MCF 10A (cell line): ENCODE measurements at regions of chr1 and their contacts with region 1.

Region 1: DNA sequence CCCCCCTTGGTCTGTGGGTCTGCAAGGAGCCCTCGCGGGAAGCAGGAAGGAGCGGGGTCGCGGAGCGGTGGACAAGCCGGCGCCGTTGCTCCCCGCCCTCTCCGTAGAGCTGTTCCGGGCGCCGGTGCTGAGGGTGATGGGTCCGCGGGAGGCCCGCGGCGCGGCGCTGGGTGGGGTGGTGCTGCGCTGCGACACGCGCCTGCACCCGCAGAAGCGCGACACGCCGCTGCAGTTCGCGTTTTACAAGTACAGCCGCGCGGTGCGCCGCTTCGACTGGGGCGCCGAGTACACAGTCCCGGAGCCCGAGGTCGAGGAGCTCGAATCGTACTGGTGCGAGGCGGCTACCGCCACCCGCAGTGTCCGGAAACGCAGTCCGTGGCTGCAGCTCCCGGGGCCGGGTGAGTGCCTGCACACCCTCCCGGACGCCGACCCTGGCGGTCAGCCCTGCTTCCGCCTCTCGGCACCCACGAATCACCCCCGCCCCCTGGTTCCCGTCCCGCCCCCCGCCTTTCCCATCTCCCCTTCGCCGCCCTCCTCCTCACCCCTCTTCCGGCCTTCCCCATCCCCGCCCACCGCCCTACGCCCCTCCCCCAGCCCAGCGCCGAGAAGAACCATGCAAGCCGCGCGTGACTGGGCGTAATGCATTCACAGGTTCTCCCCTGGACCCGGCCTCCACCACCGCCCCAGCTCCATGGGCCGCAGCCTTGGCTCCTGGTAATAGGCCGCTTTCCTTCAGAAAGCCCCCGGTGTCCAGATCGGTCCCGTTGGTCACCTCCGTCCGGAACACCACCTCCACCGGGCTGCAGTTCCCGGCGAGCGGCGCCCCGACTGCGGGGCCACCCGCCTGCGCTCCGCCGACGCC is 5.5 kb downstream of the FCRLB start:
- DNase-seq: peak; percentile 96
- H3K4me3 Mint-ChIP-seq: peak overlapping the region; percentile 91
- H3K27ac Mint-ChIP-seq: peak overlapping the region; percentile 92
- H3K4me1 Mint-ChIP-seq: peaks cover 37% of the 10 kb centered on the region
- H3K27me3 Mint-ChIP-seq: no peaks in the 10 kb centered on the region
- CTCF ChIP-seq: no peak

Region 2: DNA sequence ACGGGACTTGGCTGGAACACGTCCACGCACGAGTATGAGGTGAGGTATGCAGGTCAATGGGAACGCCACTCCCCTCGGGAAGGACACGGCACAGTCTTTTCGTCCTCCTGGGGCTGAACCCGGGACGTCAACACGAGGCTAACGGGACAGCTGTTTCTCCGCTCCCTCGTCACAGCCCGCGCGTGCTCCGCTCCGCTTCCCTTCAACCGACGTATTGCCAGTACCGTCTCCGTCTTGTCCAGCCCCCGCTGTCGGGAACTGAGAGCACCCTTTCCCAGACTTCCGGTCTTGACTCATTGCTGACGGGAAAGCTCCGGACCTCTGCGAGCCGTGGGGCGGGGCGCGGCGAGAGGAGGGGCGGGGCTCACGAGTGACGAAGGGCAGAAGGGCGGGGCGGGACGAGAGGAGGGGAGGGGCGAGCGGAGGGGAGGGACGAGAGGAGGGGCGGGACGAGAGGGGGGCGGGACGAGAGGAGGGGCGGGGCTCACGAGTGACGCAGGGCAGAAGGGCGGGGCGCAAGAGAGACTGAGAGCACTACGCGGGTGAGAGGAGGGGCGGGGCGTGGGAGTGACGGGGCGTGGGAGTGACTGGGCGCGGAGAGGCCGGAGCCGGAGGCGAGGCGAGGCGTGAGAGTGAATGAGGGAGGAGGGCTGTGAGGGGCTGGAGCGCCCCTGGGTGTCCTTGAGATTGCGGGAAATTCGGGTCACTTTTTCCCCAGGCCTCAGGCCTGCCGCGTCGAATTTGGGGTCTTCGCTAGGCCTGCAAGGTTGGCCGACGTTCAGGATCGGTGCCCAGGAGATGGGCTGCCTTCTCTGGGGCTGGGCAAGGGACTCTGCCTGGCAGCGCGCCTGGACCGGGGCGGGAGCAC is 336.9 kb before region 1 on chr1:
- CTCF ChIA-PET with region 1: no interaction called
- POLR2A ChIA-PET with region 1: interaction called, 14 read pairs
- intact Hi-C with region 1: no loop called
- DNase-seq: peak; percentile 100
- H3K4me3 Mint-ChIP-seq: peak overlapping the region; percentile 88
- H3K27ac Mint-ChIP-seq: peak overlapping the region; percentile 99
- H3K4me1 Mint-ChIP-seq: peaks cover 16% of the 10 kb centered on the region
- H3K27me3 Mint-ChIP-seq: no peaks in the 10 kb centered on the region
- CTCF ChIP-seq: no peak

Region 3: DNA sequence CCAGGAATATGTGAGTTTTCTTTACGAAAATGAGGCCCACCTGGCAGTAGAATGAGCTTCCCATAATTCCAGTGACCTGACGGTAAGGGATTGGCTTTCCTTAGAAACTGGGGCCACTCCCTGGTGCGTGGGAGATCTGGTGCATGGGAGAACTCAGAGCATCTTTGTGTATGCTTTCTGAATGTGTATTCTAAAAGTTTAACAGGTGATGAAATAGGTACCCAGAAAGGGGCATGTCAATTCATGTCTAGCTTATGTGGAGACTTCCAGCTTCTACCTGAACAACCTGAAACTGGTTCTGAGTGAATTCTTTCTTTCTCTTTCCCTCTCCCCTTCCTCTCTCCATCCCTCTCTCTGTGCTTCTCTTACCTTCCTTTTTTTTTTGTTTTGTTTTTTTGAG is 35.0 kb before region 1 on chr1:
- CTCF ChIA-PET with region 1: no interaction called
- POLR2A ChIA-PET with region 1: interaction called, 19 read pairs
- intact Hi-C with region 1: no loop called
- DNase-seq: peak; percentile 38
- H3K4me3 Mint-ChIP-seq: no peak overlapping the region
- H3K27ac Mint-ChIP-seq: no peak overlapping the region
- H3K4me1 Mint-ChIP-seq: no peaks in the 10 kb centered on the region
- H3K27me3 Mint-ChIP-seq: peaks cover 47% of the 10 kb centered on the region
- CTCF ChIP-seq: no peak

Region 4: DNA sequence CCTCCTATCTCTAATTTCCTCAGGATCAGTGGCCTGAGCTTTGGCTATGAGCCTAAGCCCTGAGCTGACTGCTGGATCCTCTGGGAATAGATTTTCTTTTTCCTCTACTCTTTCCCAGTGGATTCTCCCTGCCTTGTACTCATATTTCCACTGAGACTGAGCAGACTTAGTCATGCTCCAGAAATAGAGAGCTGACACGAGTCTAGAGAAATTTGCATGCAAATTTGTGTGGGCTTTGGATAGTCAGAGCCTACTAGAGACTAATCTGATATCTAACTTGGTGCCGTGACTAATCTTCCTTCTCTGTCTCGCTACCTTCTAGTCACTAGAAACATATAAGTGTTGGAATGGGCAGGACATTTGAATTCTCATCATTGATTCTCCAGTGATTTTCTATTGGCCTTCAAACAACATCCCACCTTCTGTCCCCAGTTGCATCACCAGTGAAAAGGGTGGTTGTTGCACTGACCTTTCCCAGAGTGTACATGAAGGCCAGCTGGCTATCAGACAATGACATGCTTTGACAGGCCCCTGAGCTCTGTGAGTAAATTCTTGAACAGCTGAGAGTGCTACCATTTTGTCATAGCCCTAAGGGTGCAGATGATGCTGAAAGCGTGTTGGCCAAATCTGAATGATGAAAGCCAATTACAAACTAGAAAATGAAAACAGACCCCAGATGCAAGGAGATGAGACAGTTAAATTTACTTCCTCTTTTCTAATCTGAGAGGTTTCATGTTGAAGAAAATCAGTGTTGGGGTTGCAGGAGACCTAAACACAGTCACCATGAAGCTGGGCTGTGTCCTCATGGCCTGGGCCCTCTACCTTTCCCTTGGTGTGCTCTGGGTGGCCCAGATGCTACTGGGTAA is 20.1 kb before region 1 on chr1 and contains the start of gene FCRLA:
- CTCF ChIA-PET with region 1: interaction called, 11 read pairs
- POLR2A ChIA-PET with region 1: interaction called, 32 read pairs
- intact Hi-C with region 1: no loop called
- DNase-seq: peak; percentile 80
- H3K4me3 Mint-ChIP-seq: no peak within 1 kb of the TSS
- H3K27ac Mint-ChIP-seq: no peak within 1 kb of the TSS
- H3K4me1 Mint-ChIP-seq: peaks cover 7% of the 10 kb centered on the region
- H3K27me3 Mint-ChIP-seq: no peaks in the 10 kb centered on the region
- CTCF ChIP-seq: no peak
- total RNA-seq, gene FCRLA: 0.30 and 0.47 TPM in 2 replicates

Region 5: DNA sequence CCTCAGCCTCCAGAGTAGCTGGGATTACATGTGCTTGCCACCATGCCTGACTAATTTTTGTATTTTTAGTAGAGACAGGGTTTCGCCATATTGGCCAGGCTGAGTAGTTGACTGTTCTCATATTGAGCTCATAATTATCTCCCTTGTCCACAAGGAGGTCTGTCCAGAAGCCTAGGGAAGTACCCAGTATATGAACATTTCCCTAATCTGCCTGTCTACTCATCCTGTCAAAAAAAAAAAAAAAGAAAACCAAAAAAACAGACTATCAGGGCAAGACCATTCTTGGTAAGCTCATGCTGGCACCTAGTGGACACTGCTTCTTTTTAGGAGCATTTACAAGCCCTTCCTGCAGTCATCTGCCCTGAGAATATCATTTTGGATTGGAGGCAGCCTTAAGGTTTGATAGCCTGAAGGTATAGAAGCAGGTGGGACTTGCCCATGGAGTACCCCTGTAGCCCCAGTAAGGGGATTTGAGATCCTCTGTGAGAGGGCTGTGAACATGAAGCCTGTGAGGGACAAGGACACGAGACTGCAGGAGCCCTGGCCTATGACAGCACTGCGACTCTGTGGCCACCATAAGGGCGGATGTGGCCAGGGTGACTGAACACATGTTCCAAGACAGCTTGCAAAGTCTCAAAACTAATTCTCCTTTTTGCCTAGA is 11.9 kb after region 1 on chr1:
- CTCF ChIA-PET with region 1: interaction called, 121 read pairs
- POLR2A ChIA-PET with region 1: interaction called, 119 read pairs
- intact Hi-C with region 1: no loop called
- DNase-seq: peak; percentile 87
- H3K4me3 Mint-ChIP-seq: no peak overlapping the region
- H3K27ac Mint-ChIP-seq: no peak overlapping the region
- H3K4me1 Mint-ChIP-seq: peaks cover 35% of the 10 kb centered on the region
- H3K27me3 Mint-ChIP-seq: no peaks in the 10 kb centered on the region
- CTCF ChIP-seq: peak; percentile 76

Region 6: DNA sequence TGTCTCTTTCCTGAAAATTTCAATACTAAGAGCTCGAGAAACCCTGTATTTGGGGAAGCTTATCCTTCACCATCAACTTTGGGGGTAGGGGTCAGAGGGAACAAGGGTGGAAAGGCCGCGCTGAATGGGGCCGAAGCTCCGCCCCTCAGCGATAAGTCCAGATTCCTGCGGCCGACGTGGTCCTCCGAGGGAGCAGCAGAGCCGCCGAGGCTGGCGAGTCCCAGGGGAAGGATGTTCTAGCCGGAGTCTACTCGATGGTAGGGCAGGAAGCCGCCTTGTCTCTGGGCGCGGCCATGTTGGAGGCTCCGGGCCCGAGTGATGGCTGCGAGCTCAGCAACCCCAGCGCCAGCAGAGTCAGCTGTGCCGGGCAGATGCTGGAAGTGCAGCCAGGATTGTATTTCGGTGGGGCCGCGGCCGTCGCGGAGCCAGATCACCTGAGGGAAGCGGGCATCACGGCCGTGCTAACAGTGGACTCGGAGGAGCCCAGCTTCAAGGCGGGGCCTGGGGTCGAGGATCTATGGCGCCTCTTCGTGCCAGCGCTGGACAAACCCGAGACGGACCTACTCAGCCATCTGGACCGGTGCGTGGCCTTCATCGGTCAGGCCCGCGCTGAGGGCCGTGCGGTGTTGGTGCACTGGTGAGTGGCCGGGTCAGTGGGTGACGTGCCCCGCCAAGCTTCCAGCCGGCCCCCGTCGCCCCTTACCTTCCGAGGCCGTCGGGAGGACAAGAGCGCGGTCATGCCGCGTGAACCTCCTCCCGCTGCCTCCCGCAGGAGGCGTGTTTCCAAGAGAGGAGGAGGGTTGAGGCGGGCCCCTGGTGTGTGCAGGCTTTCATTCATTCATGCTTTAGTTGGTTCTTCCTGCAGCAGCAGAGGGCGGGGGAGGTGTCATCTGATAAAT is 22.9 kb after region 1 on chr1 and contains the start of gene DUSP12:
- CTCF ChIA-PET with region 1: interaction called, 7 read pairs
- POLR2A ChIA-PET with region 1: interaction called, 119 read pairs
- intact Hi-C with region 1: no loop called
- DNase-seq: peak; percentile 98
- H3K4me3 Mint-ChIP-seq: peak within 1 kb of the TSS; percentile 92
- H3K27ac Mint-ChIP-seq: peak within 1 kb of the TSS; percentile 95
- H3K4me1 Mint-ChIP-seq: peaks cover 29% of the 10 kb centered on the region
- H3K27me3 Mint-ChIP-seq: no peaks in the 10 kb centered on the region
- CTCF ChIP-seq: no peak
- total RNA-seq, gene DUSP12: 57.0 and 65.0 TPM in 2 replicates

Region 7: DNA sequence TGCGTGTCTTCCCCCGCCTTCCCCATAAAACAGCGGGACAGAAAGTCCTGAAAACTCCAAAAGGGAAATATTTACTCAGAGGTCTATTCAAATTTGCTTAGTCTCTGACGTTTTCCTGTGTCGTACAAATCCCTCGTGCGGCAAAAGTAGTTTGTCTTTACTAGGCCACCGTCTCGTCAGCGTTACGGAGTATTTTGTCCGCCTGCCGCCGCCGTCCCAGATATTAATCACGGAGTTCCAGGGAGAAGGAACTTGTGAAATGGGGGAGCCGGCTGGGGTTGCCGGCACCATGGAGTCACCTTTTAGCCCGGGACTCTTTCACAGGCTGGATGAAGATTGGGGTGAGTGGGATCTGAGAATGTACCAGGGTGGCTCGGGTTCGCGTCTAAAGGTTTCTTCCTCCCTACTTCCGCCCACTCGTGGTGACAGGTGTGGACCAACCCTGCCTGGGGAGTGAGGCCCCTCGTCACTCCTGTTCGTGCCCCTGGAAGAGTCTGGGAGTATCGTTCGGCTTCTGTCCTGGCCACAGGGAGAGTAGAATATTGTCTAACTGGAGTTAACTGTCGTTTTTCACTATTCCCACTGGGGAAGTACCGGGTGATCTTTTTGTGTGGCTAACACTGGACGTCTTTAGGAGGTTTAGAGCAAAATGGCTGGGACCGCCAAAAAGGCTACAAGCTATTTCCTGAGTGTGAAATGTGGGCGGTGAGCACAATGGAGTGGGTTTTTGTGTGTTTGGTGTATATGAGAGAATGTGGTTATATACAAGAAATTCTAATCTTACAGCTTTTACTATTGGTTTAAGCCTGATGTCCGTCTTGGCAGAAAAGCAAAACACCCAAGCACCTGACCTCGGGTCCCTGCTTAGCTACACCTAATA is 39.5 kb after region 1 on chr1 and contains the start of gene ATF6:
- CTCF ChIA-PET with region 1: no interaction called
- POLR2A ChIA-PET with region 1: interaction called, 14 read pairs
- intact Hi-C with region 1: no loop called
- DNase-seq: peak; percentile 98
- H3K4me3 Mint-ChIP-seq: peak within 1 kb of the TSS; percentile 100
- H3K27ac Mint-ChIP-seq: peak within 1 kb of the TSS; percentile 100
- H3K4me1 Mint-ChIP-seq: peaks cover 25% of the 10 kb centered on the region
- H3K27me3 Mint-ChIP-seq: no peaks in the 10 kb centered on the region
- CTCF ChIP-seq: no peak
- total RNA-seq, gene ATF6: 56.3 and 71.8 TPM in 2 replicates